PC-9 (cell line): ENCODE measurements at regions of chr11 and their contacts with region 1.

Region 1: GRCh38 chr11:12052676-12053605 is 44.5 kb upstream of the DKK3 start:
- DNase-seq: no peak
- H3K4me3 ChIP-seq: no peak overlapping the region
- H3K27ac ChIP-seq: no peak overlapping the region
- H3K4me1 ChIP-seq: peaks cover 17% of the 10 kb centered on the region
- H3K27me3 ChIP-seq: no peaks in the 10 kb centered on the region
- CTCF ChIP-seq: no peak

Region 2: DNA sequence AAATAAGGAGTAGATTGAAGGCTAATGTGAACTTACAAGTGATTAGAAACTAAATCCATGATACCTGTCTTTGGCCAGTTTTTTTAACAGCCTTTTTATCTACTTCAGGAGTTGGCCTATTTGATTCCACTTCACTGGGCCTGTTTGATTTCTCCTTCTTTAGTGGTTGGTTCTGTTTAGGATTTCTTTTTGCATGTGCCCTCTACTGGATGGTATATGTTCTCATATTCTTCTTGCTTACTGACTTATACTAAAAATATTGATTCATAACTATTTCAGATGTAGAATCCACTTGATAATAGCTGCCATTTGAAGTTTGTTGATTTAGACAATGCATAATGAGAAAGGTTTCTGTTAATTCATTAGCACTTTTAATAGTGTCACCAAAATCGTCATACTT is 157.3 kb before region 1 on chr11:
- CTCF ChIA-PET with region 1: no interaction called
- POLR2A ChIA-PET with region 1: interaction called, 15 read pairs
- intact Hi-C with region 1: no loop called
- DNase-seq: no peak
- H3K4me3 ChIP-seq: no peak overlapping the region
- H3K27ac ChIP-seq: no peak overlapping the region
- H3K4me1 ChIP-seq: no peaks in the 10 kb centered on the region
- H3K27me3 ChIP-seq: no peaks in the 10 kb centered on the region
- CTCF ChIP-seq: peak; percentile 38; the same call in 1 of the 2 replicates

Region 3: GRCh38 chr11:12110201-12110713 is 57.3 kb after region 1 on chr11 and contains the start of gene MICAL2:
- CTCF ChIA-PET with region 1: no interaction called
- POLR2A ChIA-PET with region 1: no interaction called
- intact Hi-C with region 1: loop called (anchors 10 kb)
- DNase-seq: peak; percentile 71 to 87
- H3K4me3 ChIP-seq: peak within 1 kb of the TSS; percentile 81
- H3K27ac ChIP-seq: peak within 1 kb of the TSS; percentile 41; the same call in 1 of the 2 replicates
- H3K4me1 ChIP-seq: peaks cover 20% of the 10 kb centered on the region
- H3K27me3 ChIP-seq: no peaks in the 10 kb centered on the region
- CTCF ChIP-seq: no peak
- total RNA-seq, gene MICAL2: 30.5 and 32.4 TPM in 2 replicates